ENCODE measurements at regions of chr4 and their contacts with region 1.

Region 1: GRCh38 chr4:105014635-105015034 is 132.0 kb upstream of the TET2 start:
- DNase-seq: no peak
- H3K4me3 ChIP-seq: no peak overlapping the region
- H3K27ac ChIP-seq: no peak overlapping the region
- H3K4me1 ChIP-seq: no peaks in the 10 kb centered on the region
- H3K27me3 ChIP-seq: no peaks in the 10 kb centered on the region
- CTCF ChIP-seq: no peak
- POLR2A ChIP-seq: no peak

Region 2: GRCh38 chr4:104989371-104989770 is 25.3 kb before region 1 on chr4:
- intact Hi-C with region 1: loop called (anchors 1 kb)
- DNase-seq: peak in 1 of 2 donors; percentile 28
- H3K4me3 ChIP-seq: no peak overlapping the region
- H3K27ac ChIP-seq: no peak overlapping the region
- H3K4me1 ChIP-seq: no peaks in the 10 kb centered on the region
- H3K27me3 ChIP-seq: no peaks in the 10 kb centered on the region
- CTCF ChIP-seq: no peak
- POLR2A ChIP-seq: no peak

Region 3: DNA sequence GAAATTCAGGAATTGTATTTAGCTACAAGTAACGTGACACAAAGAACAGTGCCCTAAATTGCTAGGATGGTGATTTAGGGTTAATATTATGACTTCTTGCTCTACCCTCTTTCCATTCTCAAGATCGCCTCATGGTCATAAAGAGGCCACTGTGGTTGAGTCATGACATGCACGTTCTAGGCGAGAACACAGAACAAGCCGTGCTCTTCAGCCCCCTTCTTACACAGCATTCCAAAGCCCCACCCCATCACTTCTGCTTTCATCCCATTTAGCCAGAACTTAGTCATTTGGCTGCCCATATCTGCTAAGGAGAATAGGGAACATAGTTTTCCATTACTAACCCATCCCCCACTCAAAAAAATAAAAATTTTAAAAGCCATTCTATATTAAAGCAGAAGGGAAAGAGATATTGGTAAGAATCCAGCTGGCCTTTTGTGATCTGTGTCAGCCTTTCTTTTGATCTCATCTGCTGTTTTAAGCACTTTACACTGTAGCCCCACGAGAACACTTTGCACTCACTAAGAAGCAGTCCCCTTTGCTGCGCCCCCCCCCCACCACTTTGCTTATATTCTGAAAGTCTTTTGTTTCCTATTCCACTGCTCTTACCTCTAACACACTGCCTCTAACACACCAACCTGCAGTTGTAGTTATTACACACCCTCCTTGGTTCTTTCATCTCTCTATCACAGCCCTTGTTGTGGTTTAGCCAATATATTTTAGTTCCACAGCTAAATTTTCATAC is 909.0 kb after region 1 on chr4:
- intact Hi-C with region 1: no loop called
- DNase-seq: peak; percentile 14 to 16
- H3K4me3 ChIP-seq: no peak overlapping the region
- H3K27ac ChIP-seq: no peak overlapping the region
- H3K4me1 ChIP-seq: no peaks in the 10 kb centered on the region
- H3K27me3 ChIP-seq: no peaks in the 10 kb centered on the region
- CTCF ChIP-seq: no peak
- POLR2A ChIP-seq: no peak